CD4-positive, alpha-beta T cell (primary cell): ENCODE measurements at regions of chr1 and their contacts with region 1.

Region 1: DNA sequence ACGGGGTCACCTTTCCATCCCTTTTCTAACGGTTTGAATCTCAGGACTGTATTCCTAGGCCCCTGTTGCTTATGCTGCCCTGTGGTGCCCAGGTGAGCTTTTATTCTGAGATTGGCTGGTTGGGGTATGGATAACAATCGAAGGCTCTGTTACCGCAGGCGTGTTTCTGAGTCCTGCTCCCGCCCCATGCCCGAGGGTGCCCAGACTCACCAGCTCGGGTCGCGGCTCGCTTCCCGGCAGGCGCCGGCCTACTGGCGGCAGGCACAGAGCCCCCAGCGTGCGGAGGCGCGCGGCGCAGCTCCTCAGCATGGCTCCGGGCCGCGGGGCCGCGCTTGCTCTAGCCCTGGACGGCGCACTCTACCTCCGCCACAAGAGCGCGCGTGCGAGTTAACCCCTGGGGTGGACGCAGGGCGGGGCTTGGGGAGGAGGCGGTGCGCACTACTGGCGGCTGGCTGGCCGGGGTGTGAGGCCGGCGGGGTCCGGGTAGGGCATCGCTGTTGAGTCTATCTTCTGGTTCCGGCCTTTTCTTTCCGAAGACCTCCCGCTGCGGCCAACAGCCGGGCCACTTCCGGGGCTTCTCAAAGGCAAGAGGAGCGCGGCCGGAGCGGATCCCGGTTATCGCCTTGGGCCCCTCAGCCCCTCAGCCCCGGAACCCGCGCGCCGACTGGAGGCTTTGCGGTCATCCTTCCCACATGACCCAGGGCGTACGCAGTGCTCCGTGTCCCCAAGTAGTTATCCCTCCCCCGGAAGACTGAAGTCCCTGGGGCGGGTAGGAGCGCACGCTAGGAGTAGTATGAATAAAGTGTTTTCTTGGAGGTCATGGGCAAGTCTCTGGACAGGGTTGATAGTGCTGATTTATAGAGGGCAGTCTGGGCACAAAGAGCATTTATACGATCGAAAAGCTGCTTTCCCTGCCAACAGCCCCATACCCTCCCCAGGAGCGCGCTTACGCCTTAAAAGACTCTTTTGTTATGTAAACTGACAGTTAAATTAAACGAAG is at the start of gene THEM4:
- DNase-seq: peak; percentile 80 to 94 (median 90)
- ATAC-seq: peak; percentile 82
- H3K4me3 ChIP-seq: peak within 1 kb of the TSS; percentile 70
- H3K4me3 Mint-ChIP-seq: peak within 1 kb of the TSS; percentile 88
- H3K27ac ChIP-seq: peak within 1 kb of the TSS; percentile 74 to 81
- H3K27ac Mint-ChIP-seq: peak within 1 kb of the TSS; percentile 89
- H3K4me1 ChIP-seq: peaks cover 46% of the 10 kb centered on the region
- H3K4me1 Mint-ChIP-seq: peaks cover 47% of the 10 kb centered on the region
- H3K27me3 ChIP-seq: no peaks in the 10 kb centered on the region
- H3K27me3 Mint-ChIP-seq: no peaks in the 10 kb centered on the region
- CTCF ChIP-seq: peak; percentile 12
- total RNA-seq, gene THEM4: 24.0 to 24.5 TPM

Region 2: GRCh38 chr1:151739590-151740375 is 169.7 kb before region 1 on chr1:
- CTCF ChIA-PET with region 1: no interaction called
- POLR2A ChIA-PET with region 1: no interaction called
- intact Hi-C with region 1: no loop called
- DNase-seq: no peak
- ATAC-seq: no peak
- H3K4me3 ChIP-seq: no peak overlapping the region
- H3K4me3 Mint-ChIP-seq: no peak overlapping the region
- H3K27ac ChIP-seq: no peak overlapping the region
- H3K27ac Mint-ChIP-seq: no peak overlapping the region
- H3K4me1 ChIP-seq: no peaks in the 10 kb centered on the region
- H3K4me1 Mint-ChIP-seq: no peaks in the 10 kb centered on the region
- H3K27me3 ChIP-seq: no peaks in the 10 kb centered on the region
- H3K27me3 Mint-ChIP-seq: peaks cover 4% of the 10 kb centered on the region
- CTCF ChIP-seq: no peak

Region 3: GRCh38 chr1:151888972-151889570 is 20.4 kb before region 1 on chr1:
- CTCF ChIA-PET with region 1: interaction called, 10 read pairs
- POLR2A ChIA-PET with region 1: interaction called, 106 read pairs
- intact Hi-C with region 1: loop called in 1 of 2 experiments (anchors 2 kb)
- DNase-seq: peak in 3 of 14 experiments; percentile 52 to 63 (median 62)
- ATAC-seq: peak; percentile 69
- H3K4me3 ChIP-seq: no peak overlapping the region
- H3K4me3 Mint-ChIP-seq: no peak overlapping the region
- H3K27ac ChIP-seq: no peak overlapping the region
- H3K27ac Mint-ChIP-seq: peak overlapping the region; percentile 76
- H3K4me1 ChIP-seq: peaks cover 16% of the 10 kb centered on the region
- H3K4me1 Mint-ChIP-seq: peaks cover 40% of the 10 kb centered on the region
- H3K27me3 ChIP-seq: no peaks in the 10 kb centered on the region
- H3K27me3 Mint-ChIP-seq: no peaks in the 10 kb centered on the region
- CTCF ChIP-seq: peak; percentile 68

Region 4: GRCh38 chr1:151898513-151898991 is 10.9 kb before region 1 on chr1:
- CTCF ChIA-PET with region 1: interaction called, 27 read pairs
- POLR2A ChIA-PET with region 1: interaction called, 106 read pairs
- intact Hi-C with region 1: loop called in 1 of 2 experiments (anchors 2 kb)
- DNase-seq: peak; percentile 48 to 86 (median 68)
- ATAC-seq: peak; percentile 91
- H3K4me3 ChIP-seq: peak overlapping the region; percentile 39
- H3K4me3 Mint-ChIP-seq: peak overlapping the region; percentile 83
- H3K27ac ChIP-seq: peak overlapping the region; percentile 74 to 81
- H3K27ac Mint-ChIP-seq: peak overlapping the region; percentile 96
- H3K4me1 ChIP-seq: peaks cover 64% of the 10 kb centered on the region
- H3K4me1 Mint-ChIP-seq: peaks cover 79% of the 10 kb centered on the region
- H3K27me3 ChIP-seq: no peaks in the 10 kb centered on the region
- H3K27me3 Mint-ChIP-seq: no peaks in the 10 kb centered on the region
- CTCF ChIP-seq: no peak

Region 5: GRCh38 chr1:152735648-152736047 is 826.2 kb after region 1 on chr1:
- CTCF ChIA-PET with region 1: no interaction called
- POLR2A ChIA-PET with region 1: no interaction called
- intact Hi-C with region 1: no loop called
- DNase-seq: no peak
- ATAC-seq: no peak
- H3K4me3 ChIP-seq: no peak overlapping the region
- H3K4me3 Mint-ChIP-seq: no peak overlapping the region
- H3K27ac ChIP-seq: no peak overlapping the region
- H3K27ac Mint-ChIP-seq: no peak overlapping the region
- H3K4me1 ChIP-seq: no peaks in the 10 kb centered on the region
- H3K4me1 Mint-ChIP-seq: no peaks in the 10 kb centered on the region
- H3K27me3 ChIP-seq: peaks cover 6 to 9% of the 10 kb centered on the region in 2 experiments
- H3K27me3 Mint-ChIP-seq: peaks cover 46% of the 10 kb centered on the region
- CTCF ChIP-seq: no peak